GM13977 (cell line): ENCODE measurements at regions of chr2 and their contacts with region 1.

Region 1: GRCh38 chr2:38581193-38582147 is 21.3 kb downstream of the HNRNPLL start:
- DNase-seq: peak; percentile 21
- CTCF ChIP-seq: peak; percentile 66

Region 2: GRCh38 chr2:38734299-38735058 is 153.0 kb after region 1 on chr2:
- in situ Hi-C with region 1: loop called (anchors 10 kb)
- DNase-seq: no peak
- CTCF ChIP-seq: no peak